ENCODE measurements at regions of chr2 and their contacts with region 1.

Region 1: GRCh38 chr2:211085056-211085680 is 528.8 kb downstream of the CPS1 start:
- DNase-seq: peak; percentile 40
- H3K4me3 ChIP-seq: no peak overlapping the region
- H3K27ac ChIP-seq: no peak overlapping the region
- H3K4me1 ChIP-seq: no peaks in the 10 kb centered on the region
- CTCF ChIP-seq: peak; percentile 90

Region 2: DNA sequence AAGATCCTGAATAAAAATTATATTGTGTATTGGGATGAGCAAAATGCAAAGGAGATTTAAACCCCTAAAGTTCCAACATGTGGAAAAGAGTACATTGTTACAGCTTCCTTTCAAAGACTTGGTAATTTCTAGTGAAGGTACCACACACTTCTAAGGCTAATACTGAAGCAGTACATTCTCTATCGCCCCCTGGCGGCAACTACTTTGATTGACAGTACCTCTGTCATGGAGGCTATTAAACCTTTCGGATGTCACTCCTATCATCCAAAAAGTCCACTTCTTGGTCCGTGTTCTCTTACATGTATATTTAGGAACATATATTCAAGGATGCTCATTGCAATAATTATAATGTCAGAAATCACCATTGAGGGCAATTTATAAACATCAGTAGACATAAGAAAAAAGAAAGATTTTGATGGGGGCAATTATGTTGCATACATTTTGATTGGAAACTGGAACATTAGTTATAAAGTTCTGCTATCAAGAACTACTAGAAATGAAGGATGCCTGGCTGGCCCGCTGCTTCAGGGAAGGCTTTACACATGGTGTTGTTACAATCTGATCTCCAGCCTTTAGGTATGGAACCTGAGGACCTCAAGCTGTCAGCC is 72.8 kb after region 1 on chr2:
- CTCF ChIA-PET with region 1: no interaction called
- POLR2A ChIA-PET with region 1: no interaction called
- intact Hi-C with region 1: loop called (anchors 5 kb)
- DNase-seq: peak; percentile 76
- H3K4me3 ChIP-seq: no peak overlapping the region
- H3K27ac ChIP-seq: no peak overlapping the region
- H3K4me1 ChIP-seq: no peaks in the 10 kb centered on the region
- CTCF ChIP-seq: peak; percentile 96